CD8-positive, alpha-beta memory T cell (primary cell): ENCODE measurements at regions of chr6 and their contacts with region 1.

Region 1: DNA sequence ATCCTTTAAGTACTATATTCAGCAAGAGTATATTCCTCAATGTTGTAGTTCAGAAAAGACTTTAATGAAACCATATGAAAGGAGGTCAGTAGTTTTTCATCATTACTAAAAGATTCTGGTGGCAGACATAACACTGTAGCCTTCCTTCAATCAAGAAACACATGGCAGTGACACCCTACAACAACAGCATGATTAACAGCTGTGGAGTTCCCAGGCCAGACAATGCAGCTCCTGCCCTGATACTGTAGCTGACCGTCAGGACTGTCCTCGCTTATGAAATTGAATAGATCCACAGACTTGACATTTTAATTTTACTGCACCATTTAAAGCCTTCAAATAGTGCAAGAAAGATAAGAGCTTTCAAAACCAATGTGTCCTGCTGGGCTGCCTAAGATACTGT is 43.6 kb downstream of the USP45 start:
- DNase-seq: no peak
- H3K4me3 ChIP-seq: no peak overlapping the region
- H3K4me3 Mint-ChIP-seq: no peak overlapping the region
- H3K27ac ChIP-seq: no peak overlapping the region
- H3K27ac Mint-ChIP-seq: peak overlapping the region in 2 of 8 donors; percentile 16 to 37
- H3K4me1 ChIP-seq: no peaks in the 10 kb centered on the region
- H3K4me1 Mint-ChIP-seq: no peaks in the 10 kb centered on the region
- H3K27me3 ChIP-seq: no peaks in the 10 kb centered on the region
- H3K27me3 Mint-ChIP-seq: no peaks in the 10 kb centered on the region

Region 2: GRCh38 chr6:97726378-97726777 is 1745.3 kb before region 1 on chr6:
- CTCF ChIA-PET with region 1: no interaction called
- POLR2A ChIA-PET with region 1: no interaction called
- DNase-seq: no peak
- H3K4me3 ChIP-seq: no peak overlapping the region
- H3K4me3 Mint-ChIP-seq: no peak overlapping the region
- H3K27ac ChIP-seq: no peak overlapping the region
- H3K27ac Mint-ChIP-seq: no peak overlapping the region
- H3K4me1 ChIP-seq: no peaks in the 10 kb centered on the region
- H3K4me1 Mint-ChIP-seq: no peaks in the 10 kb centered on the region
- H3K27me3 ChIP-seq: no peaks in the 10 kb centered on the region
- H3K27me3 Mint-ChIP-seq: no peaks in the 10 kb centered on the region

Region 3: GRCh38 chr6:99446076-99446475 is 25.6 kb before region 1 on chr6:
- CTCF ChIA-PET with region 1: no interaction called
- POLR2A ChIA-PET with region 1: no interaction called
- DNase-seq: no peak
- H3K4me3 ChIP-seq: no peak overlapping the region
- H3K4me3 Mint-ChIP-seq: no peak overlapping the region
- H3K27ac ChIP-seq: no peak overlapping the region
- H3K27ac Mint-ChIP-seq: no peak overlapping the region
- H3K4me1 ChIP-seq: no peaks in the 10 kb centered on the region
- H3K4me1 Mint-ChIP-seq: no peaks in the 10 kb centered on the region
- H3K27me3 ChIP-seq: no peaks in the 10 kb centered on the region
- H3K27me3 Mint-ChIP-seq: peaks cover 0 to 1% of the 10 kb centered on the region in 2 donors

Region 4: GRCh38 chr6:99746261-99746895 is 274.7 kb after region 1 on chr6:
- CTCF ChIA-PET with region 1: interaction called, 14 read pairs
- POLR2A ChIA-PET with region 1: no interaction called
- DNase-seq: peak; percentile 5 to 67 (median 48)
- H3K4me3 ChIP-seq: no peak overlapping the region
- H3K4me3 Mint-ChIP-seq: no peak overlapping the region
- H3K27ac ChIP-seq: no peak overlapping the region
- H3K27ac Mint-ChIP-seq: no peak overlapping the region
- H3K4me1 ChIP-seq: no peaks in the 10 kb centered on the region
- H3K4me1 Mint-ChIP-seq: no peaks in the 10 kb centered on the region
- H3K27me3 ChIP-seq: no peaks in the 10 kb centered on the region
- H3K27me3 Mint-ChIP-seq: peaks cover 18 to 65% of the 10 kb centered on the region in 2 donors